CD4-positive, alpha-beta memory T cell (primary cell): ENCODE measurements at regions of chr19 and their contacts with region 1.

Region 1: GRCh38 chr19:44570984-44571684 is 41.7 kb upstream of the CEACAM20 start:
- DNase-seq: peak; percentile 25 to 48 (median 33)
- H3K4me3 ChIP-seq: no peak overlapping the region
- H3K4me3 Mint-ChIP-seq: no peak overlapping the region
- H3K27ac ChIP-seq: no peak overlapping the region
- H3K27ac Mint-ChIP-seq: no peak overlapping the region
- H3K4me1 ChIP-seq: no peaks in the 10 kb centered on the region
- H3K4me1 Mint-ChIP-seq: peaks cover 0 to 4% (median 1%) of the 10 kb centered on the region in 4 donors
- H3K27me3 ChIP-seq: no peaks in the 10 kb centered on the region
- H3K27me3 Mint-ChIP-seq: peaks cover 0 to 10% of the 10 kb centered on the region in 2 donors

Region 2: GRCh38 chr19:44582581-44583265 is 11.6 kb after region 1 on chr19:
- CTCF ChIA-PET with region 1: interaction called, 13 read pairs
- POLR2A ChIA-PET with region 1: no interaction called
- intact Hi-C with region 1: no loop called
- DNase-seq: no peak
- H3K4me3 ChIP-seq: no peak overlapping the region
- H3K4me3 Mint-ChIP-seq: no peak overlapping the region
- H3K27ac ChIP-seq: no peak overlapping the region
- H3K27ac Mint-ChIP-seq: no peak overlapping the region
- H3K4me1 ChIP-seq: no peaks in the 10 kb centered on the region
- H3K4me1 Mint-ChIP-seq: no peaks in the 10 kb centered on the region
- H3K27me3 ChIP-seq: no peaks in the 10 kb centered on the region
- H3K27me3 Mint-ChIP-seq: peaks cover 0 to 6% of the 10 kb centered on the region in 2 donors

Region 3: DNA sequence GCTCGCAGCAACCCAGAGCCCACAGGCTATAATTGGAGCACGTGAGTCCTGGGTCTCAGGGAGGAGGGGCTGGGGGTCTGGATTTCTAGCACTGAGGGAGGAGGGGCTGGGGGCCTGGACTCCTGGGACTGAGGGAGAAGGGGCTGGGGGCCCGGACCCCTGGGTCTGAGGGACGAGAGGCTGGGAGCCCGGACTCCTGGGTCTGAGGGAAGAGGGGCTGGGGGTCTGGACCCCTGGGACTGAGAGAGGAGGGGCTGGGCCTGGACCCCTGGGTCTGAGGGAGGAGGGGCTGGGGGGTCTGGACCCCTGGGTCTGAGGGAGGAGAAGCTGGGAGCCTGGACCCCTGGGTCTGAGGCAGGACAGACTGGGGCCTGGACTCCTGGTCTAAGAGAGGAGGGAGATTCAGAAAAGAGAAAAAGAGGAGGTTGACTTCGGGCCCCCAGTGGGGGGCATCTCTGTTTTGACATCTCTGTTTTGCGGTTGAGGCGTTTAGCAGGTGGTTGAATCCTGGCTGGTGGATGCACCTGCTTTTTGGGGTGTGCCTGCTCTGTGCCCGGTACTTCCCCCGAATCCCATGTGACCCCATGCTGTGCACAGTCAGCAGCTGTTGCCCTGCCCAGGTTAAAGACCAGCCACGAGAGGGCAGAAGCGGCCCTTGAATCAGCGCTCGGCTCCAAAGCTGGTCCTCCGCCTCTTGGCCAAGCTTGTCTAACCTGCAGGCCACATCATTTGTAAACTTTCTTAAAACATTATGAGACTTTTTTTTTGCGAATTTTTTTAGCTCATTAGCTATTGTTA is 83.0 kb after region 1 on chr19:
- CTCF ChIA-PET with region 1: interaction called, 18 read pairs
- POLR2A ChIA-PET with region 1: no interaction called
- intact Hi-C with region 1: no loop called
- DNase-seq: peak; percentile 50 to 74 (median 64)
- H3K4me3 ChIP-seq: no peak overlapping the region
- H3K4me3 Mint-ChIP-seq: no peak overlapping the region
- H3K27ac ChIP-seq: no peak overlapping the region
- H3K27ac Mint-ChIP-seq: peak overlapping the region in 2 of 7 donors; percentile 41 to 50
- H3K4me1 ChIP-seq: peaks cover 5% of the 10 kb centered on the region
- H3K4me1 Mint-ChIP-seq: peaks cover 1 to 13% (median 8%) of the 10 kb centered on the region in 4 donors
- H3K27me3 ChIP-seq: no peaks in the 10 kb centered on the region
- H3K27me3 Mint-ChIP-seq: peaks cover 1 to 5% of the 10 kb centered on the region in 2 donors